ENCODE measurements at regions of chr19 and their contacts with region 1.

Region 1: DNA sequence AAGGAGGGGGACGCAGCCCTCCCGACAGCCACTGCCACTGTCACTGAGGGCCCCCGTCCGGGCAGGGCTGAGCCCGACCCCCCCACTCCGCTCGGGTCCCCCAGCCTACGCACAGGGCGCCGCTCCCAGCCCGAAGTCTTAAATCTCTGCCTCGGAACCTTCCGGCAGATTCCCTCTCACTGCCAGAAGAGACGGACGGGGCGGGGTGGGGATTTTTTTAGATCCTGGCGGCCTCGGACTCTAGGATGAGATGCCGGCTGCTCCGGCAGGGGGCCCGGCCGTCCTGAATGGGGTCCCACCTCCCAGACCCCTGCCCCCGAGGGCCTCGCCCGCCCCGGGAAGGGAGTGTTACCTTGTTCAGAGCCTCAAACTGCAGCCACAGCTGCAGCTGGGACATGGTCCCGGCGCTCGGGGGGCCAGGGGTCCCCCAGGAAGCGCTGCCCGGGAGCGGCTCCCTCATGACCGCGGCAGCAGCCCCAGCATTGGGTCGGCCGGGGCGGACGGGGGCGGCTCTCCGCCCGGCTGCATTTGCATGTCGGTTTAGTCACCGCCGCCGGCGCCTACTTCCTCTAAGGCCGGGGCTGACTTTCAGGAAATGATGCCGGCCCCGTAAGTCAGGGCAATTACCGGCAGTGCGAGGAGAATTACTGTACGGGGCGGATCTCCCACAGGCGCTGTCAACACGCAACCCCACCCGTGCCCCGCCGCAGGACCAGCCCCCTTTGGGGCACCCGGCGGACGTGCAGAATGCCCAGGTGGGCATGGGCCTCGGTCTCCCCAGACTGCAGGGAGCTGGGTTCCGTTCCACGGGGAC is 28.2 kb downstream of the GPX4 start:
- DNase-seq: peak; percentile 54 to 93 (median 86)
- ATAC-seq: peak; percentile 66
- H3K4me3 ChIP-seq: peak overlapping the region; percentile 83 to 96
- H3K4me3 Mint-ChIP-seq: peak overlapping the region; percentile 84
- H3K27ac ChIP-seq: peak overlapping the region; percentile 81 to 89
- H3K27ac Mint-ChIP-seq: peak overlapping the region; percentile 92
- H3K4me1 ChIP-seq: peaks cover 46% of the 10 kb centered on the region
- H3K4me1 Mint-ChIP-seq: peaks cover 29% of the 10 kb centered on the region
- H3K27me3 ChIP-seq: no peaks in the 10 kb centered on the region
- H3K27me3 Mint-ChIP-seq: no peaks in the 10 kb centered on the region
- CTCF ChIP-seq: no peak

Region 2: DNA sequence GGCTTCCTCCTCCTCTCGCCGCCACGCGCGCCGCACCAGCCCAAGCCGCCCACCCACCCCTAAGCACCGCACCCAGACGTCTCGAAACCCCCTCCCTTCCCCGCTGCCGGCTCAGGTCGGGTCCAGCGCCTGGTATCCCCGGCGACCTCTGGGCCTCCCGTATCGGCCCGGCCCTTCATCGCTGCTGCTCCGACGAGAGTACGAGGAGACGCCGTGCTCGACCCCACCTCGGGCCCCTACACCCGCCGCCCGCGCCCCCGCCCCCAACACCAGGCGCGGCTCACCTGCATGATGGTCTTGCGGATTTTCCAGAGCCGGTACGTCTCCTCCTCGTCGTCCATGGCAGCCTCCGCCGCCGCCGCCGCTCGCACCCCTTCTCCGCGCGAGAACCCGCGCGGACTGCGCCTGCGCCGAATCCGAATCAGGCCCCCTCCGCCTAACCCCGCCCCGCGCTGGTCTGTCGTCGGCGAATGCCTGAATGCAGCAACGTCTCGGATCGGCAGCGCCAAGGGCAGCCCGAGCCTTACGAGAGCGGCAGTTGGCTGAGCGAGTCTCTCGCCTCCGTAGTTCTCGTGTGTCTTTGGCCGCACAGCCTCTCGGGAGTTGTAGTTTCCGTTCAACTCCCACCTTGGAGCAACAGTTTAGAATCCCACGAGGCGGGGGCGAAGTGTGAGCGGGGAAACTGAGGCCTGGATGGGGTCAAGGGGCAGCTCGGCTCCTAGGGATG is 36.8 kb before region 1 on chr19 and contains the start of gene POLR2E:
- CTCF ChIA-PET with region 1: no interaction called
- POLR2A ChIA-PET with region 1: interaction called, 4 read pairs
- intact Hi-C with region 1: loop called in 1 of 2 experiments (anchors 5 kb)
- DNase-seq: peak; percentile 97 to 99 (median 99)
- ATAC-seq: peak; percentile 93
- H3K4me3 ChIP-seq: peak within 1 kb of the TSS; percentile 79 to 86
- H3K4me3 Mint-ChIP-seq: peak within 1 kb of the TSS; percentile 94
- H3K27ac ChIP-seq: peak within 1 kb of the TSS; percentile 58 to 64
- H3K27ac Mint-ChIP-seq: peak within 1 kb of the TSS; percentile 90
- H3K4me1 ChIP-seq: peaks cover 51% of the 10 kb centered on the region
- H3K4me1 Mint-ChIP-seq: peaks cover 41% of the 10 kb centered on the region
- H3K27me3 ChIP-seq: no peaks in the 10 kb centered on the region
- H3K27me3 Mint-ChIP-seq: no peaks in the 10 kb centered on the region
- CTCF ChIP-seq: no peak
- total RNA-seq, gene POLR2E: 75.3 to 76.2 TPM

Region 3: DNA sequence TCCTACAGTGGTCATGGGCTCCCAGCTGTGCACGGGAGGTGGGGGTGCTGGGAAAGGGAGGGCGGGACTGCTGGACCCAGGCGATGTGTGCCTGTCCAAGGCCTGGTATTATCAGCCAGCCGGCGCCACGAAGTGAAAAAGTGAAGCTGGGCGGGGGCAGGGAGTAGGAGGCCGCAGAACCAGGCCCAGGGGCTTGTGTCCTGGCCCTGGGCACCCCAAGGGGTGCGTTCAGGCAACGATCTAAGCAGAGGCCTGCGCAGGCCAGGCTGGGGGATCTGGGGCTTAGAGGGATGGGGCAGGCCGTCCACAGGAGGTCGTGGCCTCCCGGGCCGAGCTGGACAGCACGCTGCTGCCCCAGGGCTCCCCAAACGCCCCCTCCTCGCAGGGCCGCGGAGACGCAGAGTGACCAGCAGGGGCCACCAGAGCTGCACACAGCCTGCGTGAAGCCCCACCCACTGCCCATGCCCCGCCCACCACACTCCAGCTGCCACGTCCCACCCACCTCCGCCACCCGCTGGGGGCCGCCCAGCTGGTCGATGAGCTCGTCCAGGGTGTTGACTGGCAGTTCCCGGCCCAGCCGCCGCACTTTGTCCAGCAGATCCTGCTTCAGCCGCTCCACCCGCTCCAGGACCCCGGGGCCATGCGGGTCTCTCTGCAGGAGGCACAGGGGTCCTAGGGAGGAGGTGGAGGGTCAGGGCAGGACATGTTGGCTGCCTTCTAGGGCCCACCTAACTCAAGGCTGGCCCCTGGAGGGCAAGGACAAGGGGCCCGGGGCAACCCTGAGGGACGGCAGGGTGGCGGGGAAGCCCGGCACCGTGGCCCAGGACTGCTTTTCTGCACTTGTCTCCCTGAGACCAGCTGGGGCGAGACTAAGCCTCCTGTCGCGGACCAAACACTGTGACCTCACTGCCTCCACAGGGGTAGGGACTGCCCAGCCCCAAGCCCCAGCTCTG is 18.6 kb before region 1 on chr19:
- CTCF ChIA-PET with region 1: interaction called, 23 read pairs
- POLR2A ChIA-PET with region 1: interaction called, 10 read pairs
- intact Hi-C with region 1: no loop called
- DNase-seq: peak; percentile 67 to 92 (median 89)
- ATAC-seq: peak; percentile 97
- H3K4me3 ChIP-seq: no peak overlapping the region
- H3K4me3 Mint-ChIP-seq: no peak overlapping the region
- H3K27ac ChIP-seq: peak overlapping the region in 1 of 2 experiments; percentile 56
- H3K27ac Mint-ChIP-seq: no peak overlapping the region
- H3K4me1 ChIP-seq: peaks cover 14% of the 10 kb centered on the region
- H3K4me1 Mint-ChIP-seq: peaks cover 4% of the 10 kb centered on the region
- H3K27me3 ChIP-seq: no peaks in the 10 kb centered on the region
- H3K27me3 Mint-ChIP-seq: no peaks in the 10 kb centered on the region
- CTCF ChIP-seq: peak; percentile 85

Region 4: GRCh38 chr19:1173845-1174809 is 42.2 kb after region 1 on chr19 and contains the start of gene SBNO2:
- CTCF ChIA-PET with region 1: no interaction called
- POLR2A ChIA-PET with region 1: interaction called, 3 read pairs
- intact Hi-C with region 1: loop called (anchors 1 to 2 kb)
- DNase-seq: peak; percentile 82 to 95 (median 89)
- ATAC-seq: peak; percentile 92
- H3K4me3 ChIP-seq: peak within 1 kb of the TSS; percentile 64 to 77
- H3K4me3 Mint-ChIP-seq: peak within 1 kb of the TSS; percentile 89
- H3K27ac ChIP-seq: peak within 1 kb of the TSS; percentile 70 to 73
- H3K27ac Mint-ChIP-seq: peak within 1 kb of the TSS; percentile 94
- H3K4me1 ChIP-seq: peaks cover 23% of the 10 kb centered on the region
- H3K4me1 Mint-ChIP-seq: peaks cover 26% of the 10 kb centered on the region
- H3K27me3 ChIP-seq: no peaks in the 10 kb centered on the region
- H3K27me3 Mint-ChIP-seq: no peaks in the 10 kb centered on the region
- CTCF ChIP-seq: no peak
- total RNA-seq, gene SBNO2: 123 to 134 TPM

Region 5: GRCh38 chr19:1189419-1189818 is 57.5 kb after region 1 on chr19:
- CTCF ChIA-PET with region 1: interaction called, 5 read pairs
- POLR2A ChIA-PET with region 1: interaction called, 3 read pairs
- intact Hi-C with region 1: loop called (anchors 5 kb)
- DNase-seq: peak in 8 of 9 experiments; percentile 31 to 75 (median 59)
- ATAC-seq: peak; percentile 65
- H3K4me3 ChIP-seq: no peak overlapping the region
- H3K4me3 Mint-ChIP-seq: no peak overlapping the region
- H3K27ac ChIP-seq: peak overlapping the region in 1 of 2 experiments; percentile 28
- H3K27ac Mint-ChIP-seq: peak overlapping the region; percentile 32
- H3K4me1 ChIP-seq: peaks cover 22% of the 10 kb centered on the region
- H3K4me1 Mint-ChIP-seq: peaks cover 20% of the 10 kb centered on the region
- H3K27me3 ChIP-seq: no peaks in the 10 kb centered on the region
- H3K27me3 Mint-ChIP-seq: no peaks in the 10 kb centered on the region
- CTCF ChIP-seq: no peak

Region 6: DNA sequence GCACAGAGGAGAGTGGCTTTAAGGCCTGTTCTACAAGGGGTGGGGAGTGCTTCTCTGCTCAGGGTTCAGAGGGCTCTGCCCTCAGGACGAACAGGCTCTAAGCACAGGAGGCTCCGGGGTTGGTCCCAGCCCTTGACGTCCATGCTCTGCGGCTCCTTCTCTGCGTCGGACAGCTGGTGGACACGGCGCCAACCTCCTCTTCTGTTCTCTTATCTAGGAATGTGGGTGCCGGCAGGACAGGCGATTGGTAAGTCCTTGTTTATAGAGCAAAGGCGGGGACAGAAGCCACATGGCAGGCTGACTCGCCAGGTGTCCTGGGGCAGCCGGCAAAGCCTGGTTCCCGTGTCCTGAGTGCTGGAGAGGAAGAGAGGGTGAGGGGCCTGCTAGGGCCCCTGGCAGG is 297.8 kb after region 1 on chr19:
- CTCF ChIA-PET with region 1: no interaction called
- POLR2A ChIA-PET with region 1: no interaction called
- intact Hi-C with region 1: no loop called
- DNase-seq: no peak
- ATAC-seq: no peak
- H3K4me3 ChIP-seq: no peak overlapping the region
- H3K4me3 Mint-ChIP-seq: no peak overlapping the region
- H3K27ac ChIP-seq: no peak overlapping the region
- H3K27ac Mint-ChIP-seq: no peak overlapping the region
- H3K4me1 ChIP-seq: no peaks in the 10 kb centered on the region
- H3K4me1 Mint-ChIP-seq: no peaks in the 10 kb centered on the region
- H3K27me3 ChIP-seq: no peaks in the 10 kb centered on the region
- H3K27me3 Mint-ChIP-seq: no peaks in the 10 kb centered on the region
- CTCF ChIP-seq: no peak

Measured in CD8-positive, alpha-beta T cell (primary cell).